MCF 10A (cell line): ENCODE measurements at regions of chr3 and their contacts with region 1.

Region 1: GRCh38 chr3:132180337-132180791 is 136.8 kb upstream of the ACP3 start:
- DNase-seq: peak; percentile 72
- H3K4me3 Mint-ChIP-seq: no peak overlapping the region
- H3K27ac Mint-ChIP-seq: no peak overlapping the region
- H3K4me1 Mint-ChIP-seq: no peaks in the 10 kb centered on the region
- H3K27me3 Mint-ChIP-seq: no peaks in the 10 kb centered on the region
- CTCF ChIP-seq: peak; percentile 54

Region 2: GRCh38 chr3:131033480-131034080 is 1146.8 kb before region 1 on chr3:
- CTCF ChIA-PET with region 1: no interaction called
- POLR2A ChIA-PET with region 1: no interaction called
- intact Hi-C with region 1: loop called (anchors 5 kb)
- DNase-seq: peak; percentile 56
- H3K4me3 Mint-ChIP-seq: no peak overlapping the region
- H3K27ac Mint-ChIP-seq: no peak overlapping the region
- H3K4me1 Mint-ChIP-seq: peaks cover 7% of the 10 kb centered on the region
- H3K27me3 Mint-ChIP-seq: no peaks in the 10 kb centered on the region
- CTCF ChIP-seq: peak; percentile 67

Region 3: DNA sequence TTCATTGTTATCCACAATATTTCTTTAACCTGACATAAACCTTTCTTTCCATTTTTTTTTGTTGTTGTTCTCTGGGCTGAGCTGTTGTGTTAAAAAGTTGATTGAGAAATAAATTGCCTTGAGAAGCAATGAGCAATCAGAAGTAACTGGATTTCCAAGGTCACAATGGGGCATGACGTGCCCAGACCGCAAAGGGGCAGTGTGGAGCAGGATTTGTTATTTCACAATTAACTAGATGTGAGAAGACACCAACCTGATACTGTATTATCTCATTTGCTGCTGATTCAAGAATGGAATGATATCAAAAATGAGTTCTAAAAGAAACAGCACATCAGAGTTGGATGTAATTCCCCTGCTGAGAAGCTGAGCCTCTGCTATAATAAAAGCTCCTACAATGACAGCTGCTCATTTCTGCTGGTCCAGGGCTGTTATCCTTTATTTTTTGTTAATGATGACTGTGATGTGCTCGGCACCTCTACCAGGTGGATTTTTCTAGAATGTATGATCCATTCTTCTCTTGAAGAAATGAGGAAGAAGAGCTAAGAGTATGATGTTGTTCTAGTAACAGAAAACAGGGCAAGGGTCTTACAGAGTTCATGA is 173.7 kb before region 1 on chr3:
- CTCF ChIA-PET with region 1: interaction called, 8 read pairs
- POLR2A ChIA-PET with region 1: no interaction called
- intact Hi-C with region 1: loop called (anchors 1 kb)
- DNase-seq: peak; percentile 71
- H3K4me3 Mint-ChIP-seq: no peak overlapping the region
- H3K27ac Mint-ChIP-seq: no peak overlapping the region
- H3K4me1 Mint-ChIP-seq: no peaks in the 10 kb centered on the region
- H3K27me3 Mint-ChIP-seq: no peaks in the 10 kb centered on the region
- CTCF ChIP-seq: peak; percentile 39

Region 4: DNA sequence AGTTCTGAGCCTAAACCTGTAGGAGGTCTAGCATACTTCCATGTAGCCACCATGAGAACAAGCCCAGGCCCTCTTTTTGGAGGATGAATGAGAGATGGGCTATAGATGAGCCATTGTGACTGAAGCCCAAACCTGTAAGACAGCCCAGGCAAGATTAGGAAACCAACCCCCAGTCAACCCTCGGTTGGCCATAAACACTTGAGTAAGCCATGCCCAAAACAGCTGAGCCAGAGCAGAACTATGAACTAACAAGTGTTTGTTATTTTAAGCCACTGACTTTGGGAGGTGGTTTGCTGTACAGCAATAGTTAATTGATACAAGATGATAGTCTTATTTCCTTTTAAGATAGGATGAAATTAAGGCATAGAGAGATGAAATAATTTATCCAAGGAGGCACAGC is 133.2 kb before region 1 on chr3:
- CTCF ChIA-PET with region 1: interaction called, 11 read pairs
- POLR2A ChIA-PET with region 1: no interaction called
- intact Hi-C with region 1: no loop called
- DNase-seq: no peak
- H3K4me3 Mint-ChIP-seq: no peak overlapping the region
- H3K27ac Mint-ChIP-seq: no peak overlapping the region
- H3K4me1 Mint-ChIP-seq: no peaks in the 10 kb centered on the region
- H3K27me3 Mint-ChIP-seq: no peaks in the 10 kb centered on the region
- CTCF ChIP-seq: no peak

Region 5: GRCh38 chr3:132196113-132196512 is 15.7 kb after region 1 on chr3:
- CTCF ChIA-PET with region 1: interaction called, 18 read pairs
- POLR2A ChIA-PET with region 1: interaction called, 3 read pairs
- intact Hi-C with region 1: no loop called
- DNase-seq: peak; percentile 47
- H3K4me3 Mint-ChIP-seq: no peak overlapping the region
- H3K27ac Mint-ChIP-seq: peak overlapping the region; percentile 14
- H3K4me1 Mint-ChIP-seq: peaks cover 11% of the 10 kb centered on the region
- H3K27me3 Mint-ChIP-seq: no peaks in the 10 kb centered on the region
- CTCF ChIP-seq: no peak

Region 6: GRCh38 chr3:132569153-132569552 is 388.8 kb after region 1 on chr3:
- CTCF ChIA-PET with region 1: no interaction called
- POLR2A ChIA-PET with region 1: no interaction called
- intact Hi-C with region 1: no loop called
- DNase-seq: no peak
- H3K4me3 Mint-ChIP-seq: no peak overlapping the region
- H3K27ac Mint-ChIP-seq: no peak overlapping the region
- H3K4me1 Mint-ChIP-seq: no peaks in the 10 kb centered on the region
- H3K27me3 Mint-ChIP-seq: no peaks in the 10 kb centered on the region
- CTCF ChIP-seq: no peak